Naive thymus-derived CD4-positive, alpha-beta T cell (primary cell): ENCODE measurements at regions of chr6 and their contacts with region 1.

Region 1: GRCh38 chr6:136262940-136263339 is 12.8 kb upstream of the MTFR2 start:
- DNase-seq: no peak
- ATAC-seq: peak; percentile 19
- H3K4me3 ChIP-seq: no peak overlapping the region
- H3K4me3 Mint-ChIP-seq: no peak overlapping the region
- H3K27ac ChIP-seq: no peak overlapping the region
- H3K27ac Mint-ChIP-seq: peak overlapping the region in 3 of 9 donors; percentile 7 to 12 (median 9)
- H3K4me1 ChIP-seq: peaks cover 0 to 5% of the 10 kb centered on the region in 2 donors
- H3K4me1 Mint-ChIP-seq: peaks cover 17 to 51% (median 40%) of the 10 kb centered on the region in 7 donors
- H3K27me3 ChIP-seq: no peaks in the 10 kb centered on the region
- H3K27me3 Mint-ChIP-seq: no peaks in the 10 kb centered on the region

Region 2: GRCh38 chr6:136249811-136250685 is 12.9 kb before region 1 on chr6 and contains the start of gene MTFR2:
- CTCF ChIA-PET with region 1: no interaction called
- POLR2A ChIA-PET with region 1: interaction called, 4 read pairs
- intact Hi-C with region 1: loop called (anchors 1 kb)
- DNase-seq: peak; percentile 74 to 97 (median 93)
- ATAC-seq: peak; percentile 95
- H3K4me3 ChIP-seq: peak within 1 kb of the TSS; percentile 81
- H3K4me3 Mint-ChIP-seq: peak within 1 kb of the TSS; percentile 91 to 99 (median 94)
- H3K27ac ChIP-seq: peak within 1 kb of the TSS; percentile 59
- H3K27ac Mint-ChIP-seq: peak within 1 kb of the TSS; percentile 47 to 89 (median 80)
- H3K4me1 ChIP-seq: peaks cover 7 to 15% of the 10 kb centered on the region in 2 donors
- H3K4me1 Mint-ChIP-seq: peaks cover 6 to 62% (median 43%) of the 10 kb centered on the region in 7 donors
- H3K27me3 ChIP-seq: no peaks in the 10 kb centered on the region
- H3K27me3 Mint-ChIP-seq: no peaks in the 10 kb centered on the region
- total RNA-seq, gene MTFR2: 0.92 to 20.4 (median 1.9) TPM

Region 3: DNA sequence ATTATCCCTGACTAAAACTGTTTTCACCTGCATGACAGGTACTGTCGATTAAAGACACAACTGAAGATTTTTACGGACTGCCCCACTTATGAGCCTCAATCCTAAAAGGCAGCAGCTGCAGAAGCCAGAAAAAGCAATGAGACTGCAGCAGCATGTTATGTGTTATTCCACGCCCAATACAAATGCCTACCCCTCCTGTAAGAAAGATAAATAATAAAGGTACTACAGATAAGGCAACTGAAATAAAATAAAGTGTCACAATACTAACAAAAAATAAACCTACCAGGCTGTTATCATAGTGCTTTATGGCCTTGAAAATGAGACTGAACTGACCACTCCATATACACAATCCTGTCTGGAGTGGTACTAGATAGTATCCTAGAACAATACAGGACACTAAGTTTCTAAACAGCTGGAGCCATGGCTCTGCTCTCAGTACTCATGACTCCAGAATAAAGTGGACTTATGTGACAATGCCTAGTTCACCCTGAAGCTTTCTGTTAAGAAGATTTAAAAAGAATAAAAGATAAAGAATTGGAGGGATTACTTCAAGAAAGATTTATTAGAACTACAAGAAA is 17.2 kb after region 1 on chr6:
- CTCF ChIA-PET with region 1: interaction called, 4 read pairs
- POLR2A ChIA-PET with region 1: interaction called, 154 read pairs
- intact Hi-C with region 1: loop called in 1 of 2 experiments (anchors 1 kb)
- DNase-seq: no peak
- ATAC-seq: no peak
- H3K4me3 ChIP-seq: no peak overlapping the region
- H3K4me3 Mint-ChIP-seq: peak overlapping the region in 7 of 10 donors; percentile 5 to 100 (median 98)
- H3K27ac ChIP-seq: no peak overlapping the region
- H3K27ac Mint-ChIP-seq: peak overlapping the region in 1 of 9 donors; percentile 67
- H3K4me1 ChIP-seq: peaks cover 47 to 52% of the 10 kb centered on the region in 2 donors
- H3K4me1 Mint-ChIP-seq: peaks cover 50 to 83% (median 74%) of the 10 kb centered on the region in 7 donors
- H3K27me3 ChIP-seq: no peaks in the 10 kb centered on the region
- H3K27me3 Mint-ChIP-seq: no peaks in the 10 kb centered on the region